IMR-90 (cell line): ENCODE measurements at regions of chrX and their contacts with region 1.

Region 1: GRCh38 chrX:153032397-153033118 is 23.7 kb upstream of the PNMA3 start:
- DNase-seq: peak; percentile 18
- ATAC-seq: peak; percentile 93
- H3K4me3 ChIP-seq: no peak overlapping the region
- H3K27ac ChIP-seq: no peak overlapping the region
- H3K4me1 ChIP-seq: no peaks in the 10 kb centered on the region
- H3K27me3 ChIP-seq: no peaks in the 10 kb centered on the region; the same call in 1 of the 2 replicates
- CTCF ChIP-seq: peak; percentile 80
- POLR2A ChIP-seq: no peak
- RAD21 ChIP-seq: peak; percentile 90

Region 2: DNA sequence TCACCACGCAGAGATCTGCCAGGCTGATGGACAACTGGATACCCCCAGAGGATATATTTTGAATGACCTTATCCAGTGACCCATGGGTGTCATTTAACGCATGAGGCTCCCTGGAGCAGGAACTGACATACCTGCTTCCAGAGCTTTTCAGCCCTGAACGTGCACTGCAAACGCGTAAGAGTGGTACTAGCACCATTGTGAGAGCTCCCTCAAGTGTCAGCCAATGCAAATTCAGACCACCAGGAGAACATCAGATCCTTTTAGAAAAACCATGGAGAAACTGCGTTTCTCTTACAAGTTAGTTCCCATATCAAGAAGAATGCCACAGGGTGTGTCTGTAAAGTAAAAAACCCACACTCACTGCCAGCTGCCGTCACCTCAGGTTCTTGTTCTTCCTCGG is 406.0 kb after region 1 on chrX:
- CTCF ChIA-PET with region 1: no interaction called
- POLR2A ChIA-PET with region 1: no interaction called
- dilution Hi-C with region 1: no loop called
- in situ Hi-C with region 1: no loop called
- intact Hi-C with region 1: loop called (anchors 1 kb)
- DNase-seq: peak; percentile 7
- ATAC-seq: 0 out of 2 replicates have a peak, but pooled peaks have one; percentile 40
- H3K4me3 ChIP-seq: no peak overlapping the region
- H3K27ac ChIP-seq: no peak overlapping the region
- H3K4me1 ChIP-seq: no peaks in the 10 kb centered on the region
- H3K27me3 ChIP-seq: peaks cover 10% of the 10 kb centered on the region
- CTCF ChIP-seq: no peak
- POLR2A ChIP-seq: no peak
- RAD21 ChIP-seq: peak; percentile 25

Region 3: DNA sequence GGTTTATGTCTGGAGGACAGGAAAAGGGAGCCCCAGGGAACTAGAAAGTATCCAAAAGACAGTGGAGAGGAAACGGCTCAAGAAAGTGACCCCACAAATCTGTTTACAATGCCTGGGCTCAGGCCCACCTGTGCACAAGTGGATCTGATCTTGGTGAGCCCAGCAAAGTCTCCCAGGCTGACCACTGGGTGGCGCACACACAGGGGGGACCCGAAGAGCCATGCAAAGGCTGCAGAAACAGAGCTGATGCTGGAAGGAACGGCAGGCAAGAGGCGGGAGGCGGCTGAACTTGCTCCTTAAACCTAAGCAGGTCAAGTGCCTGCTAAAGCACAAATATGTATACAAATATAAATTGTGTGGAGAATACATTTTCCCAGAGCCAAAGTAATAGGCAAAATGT is 428.3 kb after region 1 on chrX:
- CTCF ChIA-PET with region 1: no interaction called
- POLR2A ChIA-PET with region 1: no interaction called
- dilution Hi-C with region 1: no loop called
- in situ Hi-C with region 1: loop called (anchors 25 kb)
- intact Hi-C with region 1: loop called (anchors 2 kb)
- DNase-seq: peak; percentile 39
- ATAC-seq: peak; percentile 66
- H3K4me3 ChIP-seq: no peak overlapping the region
- H3K27ac ChIP-seq: no peak overlapping the region
- H3K4me1 ChIP-seq: no peaks in the 10 kb centered on the region; the same call in 1 of the 2 replicates
- H3K27me3 ChIP-seq: no peaks in the 10 kb centered on the region
- CTCF ChIP-seq: peak; percentile 45
- POLR2A ChIP-seq: no peak
- RAD21 ChIP-seq: peak; percentile 28

Region 4: DNA sequence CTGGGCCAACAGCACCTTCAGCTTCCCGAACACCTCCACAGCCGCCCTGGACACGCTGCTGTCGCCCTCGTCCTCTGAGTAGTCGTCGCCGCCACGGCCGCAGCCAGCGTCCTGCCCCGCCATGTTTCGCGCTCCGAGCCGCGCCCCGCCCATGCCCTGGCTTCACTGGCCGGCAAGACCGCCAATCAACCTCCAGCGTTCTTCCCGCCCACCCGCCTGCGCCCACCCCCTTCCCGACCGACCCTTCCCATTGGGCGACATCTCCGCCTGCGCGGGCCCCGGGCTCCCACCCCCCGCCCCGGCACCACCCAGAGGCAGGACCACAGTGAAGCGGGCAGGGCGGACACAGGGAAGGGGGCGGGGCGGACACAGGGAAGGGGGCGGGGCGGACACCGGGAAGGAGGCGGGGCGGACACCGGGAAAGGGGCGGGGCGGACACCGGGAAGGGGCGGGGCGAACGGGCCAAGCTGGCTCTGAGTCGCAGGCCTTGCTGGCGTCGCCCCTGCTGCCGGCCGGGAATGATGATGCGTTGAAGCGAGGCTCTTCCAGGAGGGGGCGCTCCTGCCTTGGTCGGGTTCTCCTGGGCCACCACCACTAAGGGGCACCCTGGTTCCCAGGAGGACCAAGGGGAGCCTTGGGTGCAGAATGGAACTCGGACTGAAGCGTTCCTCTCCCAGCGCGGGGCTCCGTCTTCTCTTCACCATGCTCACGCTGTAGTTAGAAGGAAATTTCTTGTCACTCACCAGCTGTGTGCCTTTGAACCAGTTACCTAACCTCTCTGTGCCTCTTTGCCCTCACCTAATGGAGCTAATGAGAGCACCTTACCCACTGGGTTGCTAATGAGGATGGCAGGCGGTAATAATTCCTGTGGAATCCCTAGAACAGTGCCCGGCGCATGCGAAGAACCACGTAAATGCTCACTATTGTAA is 438.1 kb after region 1 on chrX and contains the start of gene HAUS7:
- CTCF ChIA-PET with region 1: no interaction called
- POLR2A ChIA-PET with region 1: no interaction called
- dilution Hi-C with region 1: no loop called
- in situ Hi-C with region 1: loop called (anchors 25 kb)
- intact Hi-C with region 1: no loop called
- DNase-seq: peak; percentile 84
- ATAC-seq: peak; percentile 91
- H3K4me3 ChIP-seq: peak within 1 kb of the TSS; percentile 75
- H3K27ac ChIP-seq: peak within 1 kb of the TSS; percentile 29
- H3K4me1 ChIP-seq: peaks cover 17% of the 10 kb centered on the region
- H3K27me3 ChIP-seq: no peaks in the 10 kb centered on the region
- CTCF ChIP-seq: peak; percentile 98
- POLR2A ChIP-seq: no peak
- RAD21 ChIP-seq: peak; percentile 86
- total RNA-seq, gene HAUS7: 10.8 TPM in 2 replicates

Region 5: GRCh38 chrX:153507484-153508178 is 475.1 kb after region 1 on chrX:
- CTCF ChIA-PET with region 1: no interaction called
- POLR2A ChIA-PET with region 1: no interaction called
- dilution Hi-C with region 1: no loop called
- in situ Hi-C with region 1: no loop called
- intact Hi-C with region 1: loop called (anchors 1 kb)
- DNase-seq: peak; percentile 58
- ATAC-seq: peak; percentile 89
- H3K4me3 ChIP-seq: no peak overlapping the region
- H3K27ac ChIP-seq: no peak overlapping the region
- H3K4me1 ChIP-seq: no peaks in the 10 kb centered on the region
- H3K27me3 ChIP-seq: no peaks in the 10 kb centered on the region
- CTCF ChIP-seq: peak; percentile 87
- POLR2A ChIP-seq: no peak
- RAD21 ChIP-seq: peak; percentile 89